ENCODE measurements at regions of chr3 and their contacts with region 1.

Region 1: DNA sequence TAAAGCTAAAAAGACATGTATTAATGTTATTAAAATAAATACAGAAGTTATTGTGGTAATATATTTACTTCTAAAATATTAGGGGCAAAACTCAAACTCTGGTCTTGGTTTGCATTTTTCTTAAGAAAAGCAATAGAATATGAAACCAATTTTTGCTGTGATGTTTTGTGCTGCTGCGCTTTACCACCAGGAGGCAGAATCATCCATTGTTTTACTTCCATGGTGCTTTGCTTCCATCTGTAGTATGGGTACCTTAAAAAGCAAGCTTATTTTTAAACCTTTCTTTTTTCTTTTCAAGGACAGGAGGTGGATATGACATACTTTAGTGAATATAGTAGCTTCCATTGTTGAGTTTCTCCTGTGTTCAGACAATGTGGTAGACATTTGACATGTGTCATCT is 46.6 kb upstream of the MRPL3 start:
- DNase-seq: no peak
- H3K4me3 ChIP-seq: no peak overlapping the region
- H3K27ac ChIP-seq: no peak overlapping the region
- H3K4me1 ChIP-seq: peaks cover 0 to 2% (median 0%) of the 10 kb centered on the region in 4 experiments; a peak in 1 of 7 replicates
- H3K27me3 ChIP-seq: no peaks in the 10 kb centered on the region
- CTCF ChIP-seq: peak in 2 of 3 experiments; percentile 57 to 73; a peak in 2 of 4 replicates
- EP300 ChIP-seq: no peak
- POLR2A ChIP-seq: no peak
- RAD21 ChIP-seq: peak; percentile 73 to 76

Region 2: DNA sequence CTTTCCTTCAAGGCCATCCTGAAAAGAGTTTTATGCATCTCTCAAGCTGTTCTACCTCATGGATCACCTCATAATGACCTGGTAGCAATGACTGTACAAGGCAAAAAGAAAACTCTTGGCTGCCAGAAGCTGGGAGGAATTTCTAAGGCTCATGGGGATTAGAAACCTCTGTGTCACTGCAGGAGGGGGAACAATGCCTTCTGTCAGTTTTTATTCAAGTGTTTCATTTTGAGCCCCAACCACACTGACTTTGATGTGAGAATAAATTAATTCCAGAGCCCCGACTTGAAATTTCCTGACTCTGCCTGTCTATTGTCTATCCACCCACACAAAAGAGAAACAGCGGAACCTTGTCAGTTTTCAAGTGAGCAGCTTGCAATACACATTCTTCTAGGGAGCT is 12.2 kb after region 1 on chr3:
- CTCF ChIA-PET with region 1: interaction called, 21 read pairs
- POLR2A ChIA-PET with region 1: no interaction called
- DNase-seq: no peak
- H3K4me3 ChIP-seq: no peak overlapping the region
- H3K27ac ChIP-seq: no peak overlapping the region
- H3K4me1 ChIP-seq: peaks cover 0 to 7% (median 3%) of the 10 kb centered on the region in 4 experiments; a peak in 5 of 7 replicates
- H3K27me3 ChIP-seq: no peaks in the 10 kb centered on the region
- CTCF ChIP-seq: no peak
- EP300 ChIP-seq: no peak
- POLR2A ChIP-seq: no peak
- RAD21 ChIP-seq: no peak

Region 3: DNA sequence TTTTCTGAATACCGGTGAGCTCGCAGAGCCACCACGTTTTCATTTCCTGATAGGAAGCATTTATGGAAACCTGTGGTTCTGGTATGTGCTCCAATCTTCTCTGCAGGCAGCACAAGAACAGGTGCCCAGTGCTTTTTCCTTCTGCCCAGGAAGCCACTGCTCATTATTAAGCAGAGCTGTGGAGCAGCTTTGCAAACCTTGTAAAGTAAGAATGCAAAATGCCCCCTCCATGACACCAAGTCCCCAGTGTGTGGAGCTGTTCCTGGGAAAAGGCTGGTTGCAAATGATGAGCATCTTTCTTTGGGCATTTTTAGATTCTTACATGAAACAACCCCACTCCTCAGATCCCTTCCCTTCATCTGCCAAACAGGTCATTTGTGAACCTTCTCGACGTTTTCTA is 19.1 kb after region 1 on chr3:
- CTCF ChIA-PET with region 1: interaction called, 17 read pairs
- POLR2A ChIA-PET with region 1: no interaction called
- DNase-seq: no peak
- H3K4me3 ChIP-seq: no peak overlapping the region
- H3K27ac ChIP-seq: no peak overlapping the region
- H3K4me1 ChIP-seq: peaks cover 0 to 5% (median 3%) of the 10 kb centered on the region in 4 experiments; a peak in 4 of 7 replicates
- H3K27me3 ChIP-seq: no peaks in the 10 kb centered on the region; a peak in 1 of 7 replicates
- CTCF ChIP-seq: peak; percentile 17 to 63 (median 33)
- EP300 ChIP-seq: no peak
- POLR2A ChIP-seq: no peak
- RAD21 ChIP-seq: peak; percentile 16 to 39; a peak in 2 of 4 replicates

Region 4: DNA sequence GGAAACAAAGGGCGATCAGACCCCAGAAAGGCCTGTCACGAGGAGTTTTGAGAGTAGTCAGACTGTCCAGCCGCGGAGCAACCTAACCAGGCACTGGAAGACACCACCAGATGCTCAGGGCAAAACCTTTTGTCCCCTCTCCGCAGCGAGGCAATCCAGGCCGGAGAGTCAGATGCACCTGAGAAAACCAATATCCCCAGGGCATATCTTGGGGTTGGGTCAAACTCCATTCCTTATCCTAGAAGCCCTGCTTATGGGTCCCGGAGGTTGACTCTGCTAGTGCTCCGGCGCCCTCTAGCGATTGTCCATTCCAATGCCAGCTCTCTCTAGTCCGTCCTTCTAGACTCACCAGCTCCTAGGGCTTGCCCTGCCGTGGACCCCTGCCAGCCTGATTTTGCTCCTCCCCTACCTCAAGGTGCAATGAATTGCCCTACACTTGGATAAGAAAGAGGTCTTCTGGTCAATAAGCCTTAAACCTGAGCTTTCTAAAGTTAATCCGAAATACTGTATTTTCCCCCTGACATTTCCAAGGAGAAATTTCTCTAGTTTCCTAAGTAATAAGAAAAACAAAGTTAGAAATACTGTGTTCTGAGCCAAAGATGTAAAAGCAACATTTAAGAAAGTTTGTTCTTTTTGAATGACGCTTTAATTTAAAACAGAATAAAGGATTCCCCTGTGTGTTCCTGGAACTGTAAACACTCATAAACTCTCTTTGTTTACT is 480.0 kb after region 1 on chr3:
- CTCF ChIA-PET with region 1: interaction called, 12 read pairs
- POLR2A ChIA-PET with region 1: interaction called, 3 read pairs
- DNase-seq: peak; percentile 91 to 94
- H3K4me3 ChIP-seq: no peak overlapping the region
- H3K27ac ChIP-seq: no peak overlapping the region
- H3K4me1 ChIP-seq: peaks cover 0 to 2% (median 0%) of the 10 kb centered on the region in 4 experiments; a peak in 3 of 7 replicates
- H3K27me3 ChIP-seq: peaks cover 0 to 14% (median 6%) of the 10 kb centered on the region in 4 experiments; a peak in 6 of 7 replicates
- CTCF ChIP-seq: peak; percentile 85 to 96 (median 96)
- EP300 ChIP-seq: no peak
- POLR2A ChIP-seq: no peak
- RAD21 ChIP-seq: peak; percentile 99